ENCODE measurements at regions of chr1 and their contacts with region 1.

Region 1: DNA sequence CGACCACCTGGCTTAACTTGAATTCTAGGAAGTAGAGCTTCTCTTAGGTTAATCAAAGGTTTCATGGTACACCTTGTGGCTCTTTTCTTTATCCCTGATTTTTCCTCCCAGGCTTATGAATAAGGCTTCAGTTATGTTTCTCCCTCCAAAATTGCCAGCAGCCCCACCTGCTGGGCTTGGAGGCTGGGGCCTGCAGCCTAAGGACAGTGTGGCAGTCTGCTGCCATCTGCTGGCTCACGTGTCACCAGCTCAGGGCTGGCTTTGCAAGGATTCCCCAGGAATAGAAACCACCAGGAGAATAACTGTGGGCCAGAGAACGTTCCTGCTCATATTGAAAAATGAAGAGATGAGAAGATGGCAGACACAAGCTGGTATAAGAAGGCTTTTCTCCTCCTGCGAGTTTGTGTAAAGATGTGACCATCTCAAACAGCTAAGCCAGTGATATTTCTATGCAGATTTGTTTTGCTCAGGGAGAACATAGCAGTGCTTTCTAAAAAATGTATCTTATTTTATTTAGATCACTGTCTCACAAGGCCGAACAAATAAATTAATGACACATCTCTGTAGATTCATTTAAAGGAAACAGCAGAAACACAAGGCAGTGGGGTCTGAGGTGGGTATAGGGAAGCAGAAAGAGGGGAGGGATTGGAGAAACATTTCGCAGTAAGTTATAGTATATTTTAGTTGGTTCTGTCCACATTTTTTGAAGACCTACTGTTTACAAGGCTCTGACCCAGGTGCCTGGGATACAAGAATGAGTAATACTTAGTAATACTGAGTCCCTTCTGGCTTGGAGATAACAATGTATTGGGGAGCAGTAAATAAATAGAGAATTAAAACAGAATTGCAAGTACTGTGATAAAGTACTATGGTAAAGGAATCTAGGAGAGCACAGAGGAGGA is 291.1 kb upstream of the SGIP1 start:
- DNase-seq: peak; percentile 75
- ATAC-seq: peak; percentile 94
- H3K4me3 ChIP-seq: no peak overlapping the region
- H3K4me3 Mint-ChIP-seq: no peak overlapping the region
- H3K27ac ChIP-seq: no peak overlapping the region
- H3K27ac Mint-ChIP-seq: no peak overlapping the region
- H3K4me1 ChIP-seq: no peaks in the 10 kb centered on the region
- H3K4me1 Mint-ChIP-seq: peaks cover 7% of the 10 kb centered on the region
- H3K27me3 ChIP-seq: peaks cover 0 to 3% (median 0%) of the 10 kb centered on the region in 4 experiments
- H3K27me3 Mint-ChIP-seq: peaks cover 17% of the 10 kb centered on the region
- CTCF ChIP-seq: peak; percentile 97

Region 2: DNA sequence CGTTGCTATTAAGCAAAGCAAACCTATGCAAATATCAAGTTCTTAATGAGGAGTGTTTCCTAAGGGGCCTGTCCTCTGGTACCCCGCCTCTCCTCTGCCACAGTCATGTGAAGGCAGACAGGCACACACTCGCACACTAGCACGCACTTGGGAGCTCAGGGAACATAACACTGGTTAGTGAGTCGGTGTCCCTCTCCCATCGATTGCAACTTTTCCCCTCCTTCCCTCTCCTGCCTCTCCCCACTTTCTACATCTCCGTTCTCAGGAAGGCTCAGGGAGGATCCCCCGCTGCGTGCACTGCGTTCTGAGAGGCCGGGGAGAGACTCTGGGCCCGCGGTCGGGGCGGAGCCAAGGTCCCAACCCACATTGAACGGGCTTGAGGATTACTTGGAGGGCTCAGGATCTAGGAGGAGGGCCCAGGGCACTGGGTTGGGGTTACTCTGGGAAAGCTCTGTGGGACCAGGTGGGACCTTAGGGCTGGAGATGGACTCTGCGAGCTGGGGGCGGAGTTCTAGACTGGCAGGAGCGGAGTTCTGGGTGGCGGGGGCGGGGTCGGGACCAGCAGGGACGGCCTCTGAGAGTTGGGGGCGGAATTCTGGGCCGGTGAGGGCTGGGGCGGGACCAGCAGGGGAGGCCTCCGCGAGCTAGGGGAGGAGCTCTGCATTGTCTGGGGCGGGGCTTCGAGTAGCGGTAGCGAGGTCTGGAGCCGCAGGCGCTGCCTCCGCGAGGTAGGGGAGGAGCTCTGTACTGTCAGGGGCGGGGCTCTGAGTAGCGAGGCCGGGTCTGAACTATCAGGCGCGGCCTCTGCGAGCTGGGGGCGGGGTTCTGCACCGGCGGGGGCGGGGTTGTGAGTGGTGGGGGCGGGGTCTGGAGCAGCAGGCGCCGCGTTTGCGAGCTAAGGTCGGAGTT is 823.0 kb before region 1 on chr1:
- CTCF ChIA-PET with region 1: no interaction called
- POLR2A ChIA-PET with region 1: no interaction called
- intact Hi-C with region 1: loop called (anchors 10 kb)
- DNase-seq: peak; percentile 99
- ATAC-seq: peak; percentile 91
- H3K4me3 ChIP-seq: peak overlapping the region; percentile 66 to 97 (median 92)
- H3K4me3 Mint-ChIP-seq: no peak overlapping the region
- H3K27ac ChIP-seq: peak overlapping the region; percentile 66 to 75
- H3K27ac Mint-ChIP-seq: no peak overlapping the region
- H3K4me1 ChIP-seq: peaks cover 14 to 23% of the 10 kb centered on the region in 2 donors
- H3K4me1 Mint-ChIP-seq: peaks cover 16% of the 10 kb centered on the region
- H3K27me3 ChIP-seq: peaks cover 0 to 8% (median 5%) of the 10 kb centered on the region in 4 experiments
- H3K27me3 Mint-ChIP-seq: peaks cover 15% of the 10 kb centered on the region
- CTCF ChIP-seq: no peak

Region 3: DNA sequence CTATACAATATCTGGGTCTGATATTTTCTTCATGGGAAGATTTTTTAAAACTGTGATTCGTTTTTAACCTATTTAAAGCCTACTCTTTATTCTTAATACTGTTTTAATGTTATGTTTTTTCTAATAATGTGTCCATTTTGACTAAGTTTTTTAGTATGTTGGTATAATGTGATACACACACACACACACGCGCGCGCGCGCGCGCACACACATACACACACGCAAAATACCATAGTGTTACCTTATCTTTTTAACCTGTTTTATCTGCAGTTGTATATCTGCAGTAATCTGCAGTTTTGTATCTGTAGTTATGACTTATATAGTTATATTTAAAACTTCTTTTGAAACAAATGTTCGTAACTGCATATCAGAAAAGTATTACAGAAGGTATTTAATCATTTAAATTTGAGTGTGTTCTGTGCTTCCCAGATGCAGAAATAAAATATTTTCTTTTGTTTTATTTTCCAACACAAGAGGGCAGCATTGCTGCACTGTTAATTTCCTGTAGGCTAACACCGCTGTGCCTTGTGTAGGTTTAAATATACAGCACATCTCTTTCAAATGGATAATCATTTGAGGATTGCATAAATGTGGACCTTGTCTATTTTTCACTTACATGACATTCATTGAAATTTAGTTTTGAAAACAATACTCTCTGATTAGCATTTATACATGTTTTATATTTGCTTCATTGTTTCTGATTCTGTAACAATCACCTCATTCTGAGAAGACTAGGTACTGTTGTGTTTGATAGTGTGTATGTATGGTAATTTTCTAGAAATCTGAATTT is 284.1 kb before region 1 on chr1:
- CTCF ChIA-PET with region 1: interaction called, 172 read pairs
- POLR2A ChIA-PET with region 1: no interaction called
- intact Hi-C with region 1: loop called (anchors 1 kb)
- DNase-seq: peak; percentile 69
- ATAC-seq: no peak
- H3K4me3 ChIP-seq: no peak overlapping the region
- H3K4me3 Mint-ChIP-seq: no peak overlapping the region
- H3K27ac ChIP-seq: no peak overlapping the region
- H3K27ac Mint-ChIP-seq: no peak overlapping the region
- H3K4me1 ChIP-seq: no peaks in the 10 kb centered on the region
- H3K4me1 Mint-ChIP-seq: no peaks in the 10 kb centered on the region
- H3K27me3 ChIP-seq: no peaks in the 10 kb centered on the region
- H3K27me3 Mint-ChIP-seq: peaks cover 8% of the 10 kb centered on the region
- CTCF ChIP-seq: peak; percentile 90

Region 4: DNA sequence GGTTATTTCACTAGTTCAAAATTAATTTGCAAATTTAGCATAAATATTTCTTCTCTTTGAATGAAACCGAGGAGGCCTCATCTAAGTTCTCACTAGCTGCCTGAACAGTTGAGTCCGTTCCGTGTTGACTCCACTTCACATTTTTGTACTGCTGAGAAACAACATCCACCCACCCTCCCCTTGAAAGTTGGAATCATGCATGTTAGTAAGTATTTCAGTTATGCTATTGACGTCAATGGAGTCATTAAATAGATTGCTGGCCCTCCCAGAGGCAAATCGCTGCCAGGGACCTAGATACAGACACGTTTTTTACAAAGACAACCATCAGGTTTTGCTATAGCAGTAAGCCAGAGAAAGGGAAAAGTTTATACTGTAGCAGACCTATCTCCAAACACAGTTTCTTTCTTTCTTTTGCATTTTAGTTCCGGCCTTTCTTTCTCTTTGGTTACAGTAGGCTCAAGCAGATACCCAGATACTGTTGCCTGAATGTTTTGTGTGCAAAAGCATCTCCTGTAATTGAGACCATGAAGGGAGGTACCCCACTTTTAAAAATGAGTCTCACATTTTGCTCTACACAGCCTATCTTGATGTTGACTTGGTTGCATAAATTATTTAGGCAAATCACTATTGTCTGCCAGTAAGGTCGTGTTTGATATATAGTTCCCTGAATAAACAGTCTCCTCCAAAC is 28.5 kb after region 1 on chr1:
- CTCF ChIA-PET with region 1: interaction called, 10 read pairs
- POLR2A ChIA-PET with region 1: no interaction called
- intact Hi-C with region 1: no loop called
- DNase-seq: peak; percentile 48
- ATAC-seq: peak; percentile 90
- H3K4me3 ChIP-seq: no peak overlapping the region
- H3K4me3 Mint-ChIP-seq: peak overlapping the region; percentile 81
- H3K27ac ChIP-seq: no peak overlapping the region
- H3K27ac Mint-ChIP-seq: peak overlapping the region; percentile 93
- H3K4me1 ChIP-seq: peaks cover 14 to 21% of the 10 kb centered on the region in 2 donors
- H3K4me1 Mint-ChIP-seq: peaks cover 36% of the 10 kb centered on the region
- H3K27me3 ChIP-seq: no peaks in the 10 kb centered on the region
- H3K27me3 Mint-ChIP-seq: no peaks in the 10 kb centered on the region
- CTCF ChIP-seq: no peak

Measured in B cell (primary cell).